Right ventricle myocardium superior (tissue), 1 donor: ENCODE measurements at regions of chr9 and their contacts with region 1.

Region 1: GRCh38 chr9:86486891-86487837 is 133.0 kb upstream of the TUT7 start:
- DNase-seq: no peak
- ATAC-seq: peak; percentile 90

Region 2: DNA sequence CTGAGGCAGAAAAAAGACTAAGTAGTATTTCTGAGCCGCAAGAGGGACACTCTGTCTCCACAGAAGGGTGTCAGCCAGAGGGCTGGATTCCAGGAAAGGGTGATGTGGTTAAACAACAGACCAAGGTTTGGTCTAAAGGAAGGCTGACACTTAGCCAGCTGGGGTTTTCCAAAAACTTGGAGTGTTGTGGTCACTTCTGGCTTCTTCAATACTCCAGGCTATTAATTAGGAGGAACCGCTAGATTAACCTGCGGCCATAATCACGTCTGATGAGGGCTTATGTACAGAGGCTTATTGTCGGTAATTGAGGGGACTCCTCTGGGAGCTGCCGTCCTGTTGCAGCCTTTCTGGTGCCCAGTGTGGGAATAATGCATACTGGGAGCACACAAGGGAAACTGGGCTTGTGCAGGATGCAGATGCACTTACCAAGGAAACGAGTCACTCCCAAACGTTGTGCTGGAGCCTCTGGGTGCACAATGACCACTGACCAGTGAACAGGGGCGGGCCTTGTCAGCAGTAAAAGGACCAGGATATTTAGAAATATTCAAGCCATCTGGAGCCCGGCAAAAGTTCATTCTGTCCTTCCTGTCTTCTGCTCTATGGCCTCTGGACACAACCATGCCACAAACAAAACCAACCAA is 62.8 kb before region 1 on chr9:
- intact Hi-C with region 1: loop called (anchors 10 kb)
- DNase-seq: no peak
- ATAC-seq: peak; percentile 34

Region 3: DNA sequence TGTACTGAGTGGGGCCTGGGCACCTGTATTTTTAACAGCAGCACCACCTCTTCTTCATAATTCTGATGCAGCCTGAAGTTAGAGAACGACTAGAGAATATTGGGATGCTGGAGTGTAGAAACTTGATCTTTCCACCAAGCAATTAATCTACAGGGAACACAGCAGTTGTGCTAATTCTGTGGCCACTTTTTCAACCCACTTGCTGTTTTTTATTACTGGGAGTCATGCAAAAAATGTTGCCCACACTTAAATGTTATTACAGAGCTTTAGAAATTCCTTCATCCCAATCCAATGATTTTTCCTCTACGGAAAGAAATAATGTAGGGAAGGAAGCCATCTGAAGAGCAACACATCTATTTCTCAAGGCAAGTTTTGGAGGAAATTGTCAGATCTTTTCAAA is 57.9 kb after region 1 on chr9:
- intact Hi-C with region 1: no loop called
- DNase-seq: no peak
- ATAC-seq: no peak

Region 4: GRCh38 chr9:86948074-86948929 is 461.1 kb after region 1 on chr9:
- intact Hi-C with region 1: loop called (anchors 5 kb)
- DNase-seq: peak; percentile 88
- ATAC-seq: peak; percentile 83

Region 5: GRCh38 chr9:87324613-87325194 is 837.5 kb after region 1 on chr9:
- intact Hi-C with region 1: loop called (anchors 2 kb)
- DNase-seq: no peak
- ATAC-seq: peak; percentile 92